ENCODE measurements at regions of chr3 and their contacts with region 1.

Region 1: DNA sequence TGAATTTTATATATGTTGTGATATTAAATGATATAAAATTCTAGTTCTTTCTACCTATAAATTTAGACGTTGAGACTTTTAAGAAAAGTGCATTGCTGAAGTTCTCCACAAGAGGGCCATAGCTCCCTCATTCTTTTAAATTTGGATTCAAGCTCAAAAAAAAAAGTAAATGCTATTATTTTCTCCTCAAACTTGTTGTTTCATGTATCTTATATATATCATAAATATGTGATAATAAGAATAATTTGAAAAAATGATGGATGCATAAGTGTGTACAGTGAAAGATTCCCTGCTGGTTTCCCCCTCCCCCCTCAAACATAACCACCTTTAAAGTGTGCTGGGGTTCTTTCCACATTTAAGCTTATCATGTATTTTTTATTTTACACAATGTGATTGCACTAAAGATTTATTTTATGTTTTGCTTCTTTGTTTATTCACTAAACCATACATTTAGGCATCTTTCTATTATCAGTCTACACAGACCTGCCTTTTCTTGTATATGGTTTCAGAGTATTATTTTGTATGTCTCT is 769.4 kb upstream of the GOLIM4 start:
- DNase-seq: no peak
- H3K4me3 Mint-ChIP-seq: no peak overlapping the region
- H3K27ac Mint-ChIP-seq: no peak overlapping the region
- H3K4me1 Mint-ChIP-seq: no peaks in the 10 kb centered on the region
- H3K27me3 Mint-ChIP-seq: no peaks in the 10 kb centered on the region

Region 2: DNA sequence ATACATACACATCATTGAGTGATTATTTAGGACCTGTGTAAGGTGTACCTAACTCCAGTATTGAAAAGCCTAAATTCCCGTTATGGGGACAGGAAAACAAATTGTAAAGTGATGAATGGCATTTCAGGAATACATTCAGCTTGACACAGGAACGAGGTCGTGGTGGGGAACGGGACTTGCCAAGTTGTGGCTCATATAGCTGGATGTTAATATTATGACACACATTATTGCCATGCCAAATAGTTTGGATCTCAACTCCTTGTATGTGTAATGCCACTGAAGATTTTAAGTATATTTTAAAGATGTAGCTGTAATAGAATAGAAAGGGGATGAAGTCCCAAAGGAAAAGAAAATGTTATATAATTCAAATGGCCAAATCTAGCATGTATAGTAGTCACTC is 542.1 kb before region 1 on chr3:
- CTCF ChIA-PET with region 1: no interaction called
- POLR2A ChIA-PET with region 1: no interaction called
- DNase-seq: no peak
- H3K4me3 Mint-ChIP-seq: no peak overlapping the region
- H3K27ac Mint-ChIP-seq: no peak overlapping the region
- H3K4me1 Mint-ChIP-seq: no peaks in the 10 kb centered on the region
- H3K27me3 Mint-ChIP-seq: no peaks in the 10 kb centered on the region

Region 3: DNA sequence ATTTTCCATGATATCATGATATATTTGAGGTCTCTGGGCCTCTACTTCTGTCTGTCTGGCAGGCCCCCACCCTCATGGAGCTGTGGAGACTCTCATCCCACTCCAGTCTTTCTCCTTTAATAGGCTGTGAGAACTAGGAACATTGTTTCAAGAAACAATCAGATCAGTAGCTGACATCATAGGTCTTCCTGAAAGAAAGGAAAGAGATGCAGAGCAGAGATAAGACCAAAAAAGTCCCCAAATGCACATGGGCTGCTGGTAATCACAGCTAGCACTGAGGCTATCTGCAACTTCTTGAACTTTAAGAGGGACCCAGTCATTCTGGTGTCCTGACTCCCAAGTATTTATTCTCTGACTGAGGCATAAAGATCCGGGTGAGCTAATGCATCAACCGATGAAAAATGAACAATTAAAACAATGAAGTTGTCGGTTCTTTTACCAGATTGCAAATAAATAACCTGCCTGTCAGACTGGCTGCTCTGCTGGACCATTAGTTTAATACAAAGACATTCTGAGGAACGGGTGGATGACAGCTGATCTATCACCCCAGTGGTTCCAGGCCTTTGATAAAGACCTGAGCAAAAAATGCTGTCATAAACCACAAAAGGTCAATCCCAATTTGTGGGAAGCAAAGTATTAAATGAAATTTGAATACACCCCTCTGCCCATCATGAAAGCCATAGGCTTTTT is 11.4 kb after region 1 on chr3:
- CTCF ChIA-PET with region 1: interaction called, 16 read pairs
- POLR2A ChIA-PET with region 1: no interaction called
- DNase-seq: no peak
- H3K4me3 Mint-ChIP-seq: no peak overlapping the region
- H3K27ac Mint-ChIP-seq: no peak overlapping the region
- H3K4me1 Mint-ChIP-seq: no peaks in the 10 kb centered on the region
- H3K27me3 Mint-ChIP-seq: no peaks in the 10 kb centered on the region

Region 4: DNA sequence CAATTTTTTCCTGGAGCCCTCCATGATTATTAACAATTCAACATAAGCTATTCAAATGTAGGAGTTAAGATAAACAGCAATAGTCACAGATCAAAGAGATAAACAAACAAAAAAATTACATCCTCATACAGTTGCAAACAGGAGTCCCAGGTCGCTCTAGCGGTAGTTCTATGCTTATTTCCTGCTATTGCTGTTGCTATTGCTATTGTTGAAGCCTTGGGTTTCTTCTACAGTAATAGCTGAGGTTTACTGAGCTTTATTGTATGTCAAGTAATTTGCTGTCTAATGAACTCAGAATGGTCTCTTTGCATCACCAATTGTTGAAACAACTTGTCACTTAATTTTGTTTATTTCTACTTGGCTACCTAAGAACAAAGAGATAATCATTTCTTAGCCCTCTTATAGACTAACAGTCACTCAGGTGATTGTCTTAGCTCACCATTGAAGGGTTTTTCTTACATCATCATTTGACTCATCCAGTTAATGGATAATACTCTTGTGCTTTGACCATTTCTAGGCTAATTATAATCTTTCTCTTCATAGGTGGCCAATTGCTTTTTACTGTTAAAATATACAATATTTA is 143.8 kb after region 1 on chr3:
- CTCF ChIA-PET with region 1: no interaction called
- POLR2A ChIA-PET with region 1: no interaction called
- DNase-seq: no peak
- H3K4me3 Mint-ChIP-seq: no peak overlapping the region
- H3K27ac Mint-ChIP-seq: no peak overlapping the region
- H3K4me1 Mint-ChIP-seq: no peaks in the 10 kb centered on the region
- H3K27me3 Mint-ChIP-seq: no peaks in the 10 kb centered on the region